Heart right ventricle (tissue), 16 donors: ENCODE measurements at regions of chr2 and their contacts with region 1.

Region 1: DNA sequence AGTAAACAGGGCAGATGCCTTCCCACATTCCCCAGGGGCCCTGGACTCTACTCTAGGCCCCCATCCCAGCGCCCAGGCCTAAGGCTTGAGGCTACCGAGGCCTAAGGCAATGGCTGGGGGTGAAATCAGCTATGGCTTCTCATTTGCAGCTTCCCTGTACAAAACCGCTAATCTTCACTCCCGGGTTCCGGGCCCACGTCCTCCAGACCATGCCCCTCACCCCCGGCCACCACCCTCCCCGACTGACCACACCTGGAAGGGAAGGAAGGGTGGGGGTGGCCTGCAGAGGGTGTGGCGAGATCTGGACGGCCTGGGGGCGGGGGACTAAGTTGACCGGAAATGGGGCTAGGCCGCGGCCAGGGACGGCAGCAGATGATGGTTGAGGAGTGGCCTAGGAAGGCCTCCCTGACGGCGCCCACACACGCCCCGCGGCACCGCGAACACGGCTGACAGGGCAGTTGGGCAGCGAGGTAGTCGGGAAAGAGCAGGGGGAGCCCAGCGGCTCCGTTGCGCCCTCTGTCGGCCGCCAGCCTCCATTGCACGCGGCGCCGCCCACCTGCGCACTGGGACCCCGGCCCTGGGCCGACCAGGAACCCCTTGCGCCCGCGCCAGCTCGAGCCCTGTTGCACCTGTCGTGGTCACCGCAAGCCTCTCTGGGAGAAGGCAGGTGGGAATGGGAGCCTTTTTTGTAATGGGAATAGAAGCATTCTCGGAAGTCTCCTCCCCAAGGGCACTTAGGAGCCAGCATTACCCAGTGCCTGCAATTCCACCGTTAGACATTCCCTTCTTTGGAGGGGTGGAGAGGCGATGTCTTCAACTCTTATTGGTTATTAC is 117.1 kb upstream of the STPG4 start:
- DNase-seq: peak; percentile 75 to 76
- ATAC-seq: peak; percentile 77 to 85 (median 80)
- H3K4me3 ChIP-seq: peak overlapping the region in 9 of 10 donors; percentile 20 to 64 (median 48)
- H3K27ac ChIP-seq: peak overlapping the region; percentile 23 to 87 (median 72)
- H3K4me1 ChIP-seq: peaks cover 3 to 64% (median 52%) of the 10 kb centered on the region in 9 donors
- H3K27me3 ChIP-seq: no peaks in the 10 kb centered on the region
- CTCF ChIP-seq: peak; percentile 97 to 99 (median 98)

Region 2: GRCh38 chr2:46915811-46916630 is 356.2 kb before region 1 on chr2:
- intact Hi-C with region 1: loop called in 1 of 10 experiments (anchors 5 kb)
- DNase-seq: peak; percentile 91 to 92
- ATAC-seq: peak; percentile 90 to 96 (median 95)
- H3K4me3 ChIP-seq: peak overlapping the region; percentile 81 to 100 (median 97)
- H3K27ac ChIP-seq: peak overlapping the region; percentile 89 to 99 (median 96)
- H3K4me1 ChIP-seq: peaks cover 7 to 53% (median 35%) of the 10 kb centered on the region in 9 donors
- H3K27me3 ChIP-seq: no peaks in the 10 kb centered on the region
- CTCF ChIP-seq: no peak

Region 3: GRCh38 chr2:47088668-47089462 is 183.4 kb before region 1 on chr2:
- intact Hi-C with region 1: loop called in 1 of 10 experiments (anchors 10 kb)
- DNase-seq: peak in 1 of 2 donors; percentile 75
- ATAC-seq: peak; percentile 74 to 87 (median 82)
- H3K4me3 ChIP-seq: no peak overlapping the region
- H3K27ac ChIP-seq: peak overlapping the region in 8 of 10 donors; percentile 51 to 78 (median 67)
- H3K4me1 ChIP-seq: peaks cover 19 to 73% (median 60%) of the 10 kb centered on the region in 9 donors
- H3K27me3 ChIP-seq: no peaks in the 10 kb centered on the region
- CTCF ChIP-seq: no peak

Region 4: DNA sequence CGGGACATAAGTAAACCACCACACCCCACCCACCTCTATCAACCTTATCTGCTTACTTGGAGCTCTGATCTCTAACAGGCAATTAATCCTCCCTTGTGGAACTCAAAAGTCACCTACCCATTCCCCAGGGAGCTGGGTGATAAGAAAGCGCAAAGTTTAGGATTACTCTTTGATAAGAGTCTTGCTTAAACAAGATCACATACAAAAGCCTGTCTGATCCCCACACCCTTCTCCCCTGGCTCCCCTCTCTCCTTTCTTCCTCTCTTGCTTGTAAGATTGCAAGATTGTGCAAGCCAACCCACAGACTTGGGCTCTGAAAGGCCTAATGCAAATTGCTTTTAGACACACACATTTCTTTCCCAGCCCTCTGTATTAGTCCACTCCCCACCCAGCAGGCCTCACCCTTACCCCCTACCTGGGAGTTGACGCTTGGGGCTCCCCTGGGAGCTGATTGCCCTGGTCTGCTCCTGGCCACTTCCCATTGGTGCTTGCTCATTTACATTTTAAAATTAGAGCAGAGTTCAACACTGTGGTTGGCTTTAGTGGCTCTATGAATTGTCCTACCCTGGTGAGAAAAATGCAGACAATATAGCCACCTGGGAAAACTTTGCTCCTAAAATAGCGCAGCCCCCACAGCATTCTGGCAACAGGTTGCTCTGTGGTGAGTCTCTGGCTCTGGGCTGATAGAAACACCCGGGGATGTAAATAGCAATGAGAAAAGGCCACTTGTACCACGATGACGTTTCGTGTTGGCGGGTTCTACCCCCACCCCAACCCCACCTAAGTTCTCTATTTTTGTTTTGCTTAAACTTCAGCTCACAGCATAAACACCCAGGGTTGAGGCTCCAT is 37.9 kb after region 1 on chr2:
- intact Hi-C with region 1: loop called in 3 of 10 experiments (anchors 2 to 5 kb)
- DNase-seq: peak in 1 of 2 donors; percentile 16
- ATAC-seq: peak; percentile 36 to 79 (median 68)
- H3K4me3 ChIP-seq: peak overlapping the region in 1 of 10 donors; percentile 9
- H3K27ac ChIP-seq: peak overlapping the region; percentile 15 to 78 (median 67)
- H3K4me1 ChIP-seq: peaks cover 2 to 52% (median 17%) of the 10 kb centered on the region in 9 donors
- H3K27me3 ChIP-seq: no peaks in the 10 kb centered on the region
- CTCF ChIP-seq: no peak

Region 5: DNA sequence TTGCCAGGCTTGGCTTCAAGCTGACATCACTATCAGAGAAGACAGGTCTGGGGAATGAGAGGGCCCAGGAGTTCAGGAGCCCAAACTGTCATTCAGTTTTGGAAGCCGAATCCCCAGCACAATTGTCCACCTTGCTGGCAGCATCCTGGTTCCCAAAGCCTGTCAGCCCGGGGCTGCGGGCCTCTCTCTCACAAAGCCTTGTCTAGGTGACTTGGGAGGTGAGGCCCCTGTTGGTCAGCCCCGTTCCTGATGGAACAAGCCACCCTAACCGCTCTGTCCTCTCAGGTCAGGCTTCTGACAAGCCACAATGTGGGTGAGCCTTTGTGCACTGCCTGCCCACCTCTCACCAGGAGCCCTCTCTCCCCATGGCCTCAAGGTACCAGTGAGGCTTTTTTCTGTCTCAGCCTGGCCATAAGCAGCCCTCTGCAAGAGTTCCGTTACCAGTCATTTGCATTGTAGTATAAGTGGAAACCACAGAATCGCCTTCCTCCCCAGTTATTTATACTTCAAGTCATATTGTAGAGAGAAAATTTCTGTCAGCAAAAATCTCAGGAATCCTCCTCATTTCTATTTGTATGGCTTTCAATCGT is 231.3 kb after region 1 on chr2:
- intact Hi-C with region 1: no loop called
- DNase-seq: no peak
- ATAC-seq: no peak
- H3K4me3 ChIP-seq: no peak overlapping the region
- H3K27ac ChIP-seq: no peak overlapping the region
- H3K4me1 ChIP-seq: no peaks in the 10 kb centered on the region
- H3K27me3 ChIP-seq: no peaks in the 10 kb centered on the region
- CTCF ChIP-seq: no peak